PC-3 (cell line): ENCODE measurements at regions of chr10 and their contacts with region 1.

Region 1: GRCh38 chr10:16341637-16342036 is 95.2 kb upstream of the PTER start:
- DNase-seq: no peak
- ATAC-seq: no peak
- H3K4me3 ChIP-seq: no peak overlapping the region
- H3K27ac ChIP-seq: no peak overlapping the region
- H3K4me1 ChIP-seq: no peaks in the 10 kb centered on the region
- H3K27me3 ChIP-seq: no peaks in the 10 kb centered on the region
- CTCF ChIP-seq: no peak

Region 2: DNA sequence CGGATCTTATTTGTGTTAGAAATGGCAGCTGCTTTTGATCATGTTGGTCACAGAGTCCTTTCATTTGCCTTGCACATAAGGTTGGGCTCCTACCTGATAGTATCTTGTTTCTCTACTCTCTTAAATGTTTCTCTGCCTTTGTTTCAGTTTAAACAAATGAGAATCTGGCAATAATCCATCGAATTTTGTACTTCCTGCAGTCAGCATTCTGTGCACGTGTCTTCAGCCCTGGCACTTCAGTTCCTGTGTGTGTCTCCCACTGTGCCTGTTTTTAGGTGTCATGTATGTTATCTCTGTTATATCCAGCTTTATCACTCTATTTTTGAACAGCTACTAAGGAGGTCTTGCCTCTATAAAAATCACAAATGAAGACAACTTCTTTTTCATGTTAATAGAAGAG is 66.7 kb after region 1 on chr10:
- CTCF ChIA-PET with region 1: no interaction called
- POLR2A ChIA-PET with region 1: no interaction called
- intact Hi-C with region 1: loop called (anchors 10 kb)
- DNase-seq: no peak
- ATAC-seq: no peak
- H3K4me3 ChIP-seq: no peak overlapping the region
- H3K27ac ChIP-seq: no peak overlapping the region
- H3K4me1 ChIP-seq: no peaks in the 10 kb centered on the region
- H3K27me3 ChIP-seq: no peaks in the 10 kb centered on the region
- CTCF ChIP-seq: no peak